HEK293T (cell line): ENCODE measurements at regions of chr12 and their contacts with region 1.

Region 1: GRCh38 chr12:121802846-121803630 is 771 bp upstream of the SETD1B start:
- DNase-seq: peak; percentile 84

Region 2: GRCh38 chr12:121888478-121889266 is 85.6 kb after region 1 on chr12 and contains the start of gene PSMD9:
- CTCF ChIA-PET with region 1: interaction called, 3 read pairs
- POLR2A ChIA-PET with region 1: interaction called, 15 read pairs
- DNase-seq: peak; percentile 97